Activated T-helper 1 cell treated with anti-CD3 and anti-CD28 coated beads, Interleukin-12 subunit alpha, Interleukin-12 subunit beta, Interleukin-2, Interleukin-4 antibody, amounts not matched to agents 30 ng/mL and 10 ng/mL and 1 ng/mL, durations not matched to agents 14 hours and 24 hours and 36 hours (primary cell): ENCODE measurements at regions of chr1 and their contacts with region 1.

Region 1: GRCh38 chr1:12658531-12659453 is 14.9 kb downstream of the AADACL4 start:
- DNase-seq: peak; percentile 51
- H3K4me3 Mint-ChIP-seq: peak overlapping the region; percentile 40
- H3K27ac Mint-ChIP-seq: no peak overlapping the region
- H3K4me1 Mint-ChIP-seq: peaks cover 7% of the 10 kb centered on the region
- H3K27me3 Mint-ChIP-seq: peaks cover 20% of the 10 kb centered on the region

Region 2: DNA sequence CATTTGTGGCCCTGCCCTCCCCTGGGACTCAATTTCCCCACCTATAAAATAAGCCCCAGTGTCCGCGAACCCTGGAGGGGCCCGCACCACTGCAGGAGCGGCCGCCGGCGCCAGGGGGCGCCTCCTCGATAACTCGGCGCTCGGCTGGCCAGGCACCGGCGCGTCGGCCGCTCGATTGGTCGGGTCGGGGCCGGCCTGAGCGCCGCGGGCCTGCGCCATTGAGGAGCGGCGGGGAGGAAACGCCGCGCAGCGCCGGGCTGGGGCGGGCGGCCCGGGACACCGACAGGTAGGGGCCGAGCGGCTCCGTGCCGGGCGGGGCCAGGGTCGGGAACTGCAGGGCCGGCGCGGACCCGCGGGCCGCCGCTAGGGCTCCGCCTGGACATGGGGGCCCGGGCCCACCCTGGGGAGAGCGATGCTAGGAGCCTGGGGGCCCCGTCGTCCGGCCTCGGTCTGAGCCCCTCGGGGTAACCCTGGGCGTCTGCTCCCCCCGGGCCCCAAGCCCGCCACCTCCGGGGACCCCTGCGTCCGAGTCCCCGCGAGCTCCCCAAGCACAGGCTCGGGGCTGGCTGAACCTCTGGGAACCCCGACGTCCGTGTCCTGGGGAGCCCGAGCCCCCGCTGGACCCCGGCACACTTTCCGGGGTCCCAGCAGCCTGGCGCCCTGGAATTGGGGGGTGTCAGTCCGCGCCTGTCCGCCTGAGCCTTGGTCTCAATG is 428.8 kb before region 1 on chr1 and contains the start of gene VPS13D:
- intact Hi-C with region 1: loop called (anchors 2 kb)
- DNase-seq: peak; percentile 81
- H3K4me3 Mint-ChIP-seq: peak within 1 kb of the TSS; percentile 89
- H3K27ac Mint-ChIP-seq: peak within 1 kb of the TSS; percentile 52
- H3K4me1 Mint-ChIP-seq: peaks cover 14% of the 10 kb centered on the region
- H3K27me3 Mint-ChIP-seq: peaks cover 8% of the 10 kb centered on the region
- total RNA-seq, gene VPS13D: 33.6 and 35.7 TPM in 2 replicates

Region 3: DNA sequence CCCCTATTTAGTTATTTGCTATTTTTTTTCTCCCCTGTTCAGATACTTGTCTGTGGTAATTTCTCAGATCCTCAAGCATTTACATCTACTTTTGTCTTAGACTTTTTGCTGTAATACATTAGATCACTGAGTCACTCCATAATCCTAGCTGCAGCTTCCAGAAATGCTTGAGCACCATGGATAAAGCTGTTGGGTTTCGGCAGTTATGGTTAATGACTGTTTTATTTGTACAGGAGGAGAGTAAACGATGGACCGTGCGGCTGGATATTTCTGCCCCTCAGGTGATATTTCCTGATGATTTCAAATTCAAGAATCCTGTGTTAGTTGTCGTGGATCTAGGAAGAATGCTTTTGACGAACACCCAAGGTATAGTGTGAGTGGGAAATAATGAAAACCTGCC is 386.0 kb before region 1 on chr1:
- intact Hi-C with region 1: loop called (anchors 1 kb)
- DNase-seq: no peak
- H3K4me3 Mint-ChIP-seq: no peak overlapping the region
- H3K27ac Mint-ChIP-seq: no peak overlapping the region
- H3K4me1 Mint-ChIP-seq: no peaks in the 10 kb centered on the region
- H3K27me3 Mint-ChIP-seq: no peaks in the 10 kb centered on the region

Region 4: DNA sequence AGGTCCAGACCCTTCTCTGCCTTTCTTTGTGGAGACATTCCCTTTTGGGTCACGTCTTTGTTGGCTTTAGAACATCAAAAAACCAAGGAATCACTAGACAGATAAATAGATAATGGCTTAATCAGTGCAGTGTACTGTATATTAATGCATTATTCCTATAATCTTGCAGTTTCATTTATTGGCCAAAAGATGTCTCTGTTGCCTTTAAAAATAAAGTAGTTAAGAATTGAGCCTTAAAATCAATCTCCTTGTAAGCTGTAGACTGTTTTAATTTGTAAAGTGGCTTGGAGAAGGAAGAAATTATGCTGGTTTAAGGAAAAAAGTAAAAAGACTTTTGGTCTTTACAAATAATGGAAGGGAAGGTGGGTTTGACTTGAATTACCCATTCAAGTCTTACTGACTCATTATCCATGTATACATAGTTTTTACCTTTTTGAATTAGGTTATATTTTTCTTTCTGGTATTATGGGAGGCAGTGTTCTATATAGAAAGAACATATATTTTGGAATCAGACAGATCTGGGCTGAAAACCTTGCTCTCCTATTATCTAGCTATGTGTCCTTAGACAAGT is 344.4 kb before region 1 on chr1:
- intact Hi-C with region 1: loop called (anchors 1 kb)
- DNase-seq: no peak
- H3K4me3 Mint-ChIP-seq: no peak overlapping the region
- H3K27ac Mint-ChIP-seq: no peak overlapping the region
- H3K4me1 Mint-ChIP-seq: peaks cover 8% of the 10 kb centered on the region
- H3K27me3 Mint-ChIP-seq: no peaks in the 10 kb centered on the region